ENCODE measurements at regions of chr4 and their contacts with region 1.

Region 1: GRCh38 chr4:87476934-87477333 is 52.2 kb downstream of the SPARCL1 start:
- ATAC-seq: peak in 1 of 8 experiments; percentile 35
- H3K4me3 ChIP-seq: no peak overlapping the region
- H3K27ac ChIP-seq: no peak overlapping the region
- H3K4me1 ChIP-seq: no peaks in the 10 kb centered on the region

Region 2: GRCh38 chr4:86032476-86033022 is 1444.4 kb before region 1 on chr4:
- in situ Hi-C with region 1: no loop called
- ATAC-seq: peak in 4 of 8 experiments; percentile 24 to 94 (median 92)
- H3K4me3 ChIP-seq: no peak overlapping the region
- H3K27ac ChIP-seq: no peak overlapping the region
- H3K4me1 ChIP-seq: peaks cover 2 to 9% of the 10 kb centered on the region in 2 donors

Region 3: GRCh38 chr4:87375719-87376291 is 101.1 kb before region 1 on chr4:
- in situ Hi-C with region 1: loop called in 2 of 9 experiments (anchors 10 to 25 kb)
- ATAC-seq: peak in 3 of 8 experiments; percentile 40 to 53 (median 41)
- H3K4me3 ChIP-seq: no peak overlapping the region
- H3K27ac ChIP-seq: no peak overlapping the region
- H3K4me1 ChIP-seq: no peaks in the 10 kb centered on the region

Region 4: DNA sequence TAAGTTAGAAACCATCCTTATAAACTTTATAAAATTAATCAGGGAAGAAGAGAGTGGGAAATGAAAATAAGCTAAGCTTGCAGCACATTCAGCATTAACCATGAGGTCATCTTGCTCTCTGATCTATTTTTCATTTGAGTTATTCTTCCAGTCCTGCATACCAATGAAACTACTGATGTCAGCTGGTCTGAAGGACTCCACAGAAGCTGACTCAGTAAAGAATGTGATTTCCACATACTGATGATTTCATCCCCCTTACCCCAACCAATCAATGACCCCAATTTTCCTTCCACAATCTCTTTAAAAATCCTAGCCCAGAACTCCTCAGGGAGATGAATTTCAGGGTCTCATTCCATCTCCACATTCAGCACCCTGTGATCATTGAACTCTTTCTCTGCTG is 112.6 kb after region 1 on chr4:
- in situ Hi-C with region 1: no loop called
- ATAC-seq: peak; percentile 65 to 100 (median 99)
- H3K4me3 ChIP-seq: no peak overlapping the region
- H3K27ac ChIP-seq: no peak overlapping the region
- H3K4me1 ChIP-seq: peaks cover 0 to 13% of the 10 kb centered on the region in 2 donors

Measured in motor neuron (in vitro differentiated cells).